ENCODE measurements at regions of chr10 and their contacts with region 1.

Region 1: GRCh38 chr10:86389441-86390193 is 23.0 kb upstream of the GRID1 start:
- DNase-seq: peak; percentile 42 to 43
- ATAC-seq: peak; percentile 60 to 89; a peak in 5 of 6 replicates
- H3K4me3 ChIP-seq: peak overlapping the region; percentile 39
- H3K27ac ChIP-seq: peak overlapping the region; percentile 31 to 74; a peak in 4 of 6 replicates
- H3K4me1 ChIP-seq: no peaks in the 10 kb centered on the region
- CTCF ChIP-seq: no peak
- EP300 ChIP-seq: no peak
- POLR2A ChIP-seq: no peak
- RAD21 ChIP-seq: no peak

Region 2: GRCh38 chr10:86376852-86377796 is 12.5 kb before region 1 on chr10:
- CTCF ChIA-PET with region 1: interaction called, 15 read pairs
- POLR2A ChIA-PET with region 1: no interaction called
- DNase-seq: peak; percentile 71 to 75
- ATAC-seq: peak; percentile 90 to 98
- H3K4me3 ChIP-seq: no peak overlapping the region
- H3K27ac ChIP-seq: peak overlapping the region in 1 of 2 experiments; percentile 56; a peak in 2 of 6 replicates
- H3K4me1 ChIP-seq: no peaks in the 10 kb centered on the region
- CTCF ChIP-seq: peak; percentile 92
- EP300 ChIP-seq: no peak
- POLR2A ChIP-seq: no peak
- RAD21 ChIP-seq: peak; percentile 83 to 97

Region 3: DNA sequence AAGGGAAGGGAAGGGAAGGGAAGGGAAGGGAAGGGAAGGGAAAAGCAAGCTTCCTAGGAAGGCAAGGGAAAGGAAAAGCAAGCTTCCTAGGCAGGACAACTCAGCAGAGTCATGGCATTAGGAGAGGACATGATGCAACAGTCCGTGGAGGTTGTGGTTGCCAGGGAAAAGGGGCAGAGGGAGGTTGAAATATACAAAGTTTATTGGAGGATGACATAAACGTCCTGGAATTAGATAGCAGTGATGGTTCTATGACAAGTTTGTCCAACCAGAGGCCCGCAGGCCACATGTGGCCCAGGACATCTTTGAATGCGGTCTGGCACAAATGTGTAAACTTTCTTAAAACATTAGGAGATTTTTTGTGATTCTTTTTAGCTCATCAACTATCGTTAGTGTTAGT is 204.9 kb after region 1 on chr10:
- CTCF ChIA-PET with region 1: no interaction called
- POLR2A ChIA-PET with region 1: no interaction called
- DNase-seq: peak in 1 of 2 experiments; percentile 63
- ATAC-seq: peak; percentile 22 to 32; a peak in 2 of 6 replicates
- H3K4me3 ChIP-seq: no peak overlapping the region
- H3K27ac ChIP-seq: peak overlapping the region in 1 of 2 experiments; percentile 62; a peak in 4 of 6 replicates
- H3K4me1 ChIP-seq: peaks cover 9% of the 10 kb centered on the region; the same call in 2 of the 3 replicates
- CTCF ChIP-seq: no peak
- EP300 ChIP-seq: no peak
- POLR2A ChIP-seq: no peak
- RAD21 ChIP-seq: no peak

Measured in A549 (cell line).